Right ventricle myocardium inferior (tissue), 1 donor: ENCODE measurements at regions of chr14 and their contacts with region 1.

Region 1: GRCh38 chr14:21367582-21368144 is 16.2 kb downstream of the SUPT16H start:
- DNase-seq: no peak
- ATAC-seq: no peak

Region 2: GRCh38 chr14:21408147-21408546 is 40.5 kb after region 1 on chr14:
- intact Hi-C with region 1: loop called (anchors 5 kb)
- DNase-seq: no peak
- ATAC-seq: no peak

Region 3: GRCh38 chr14:21428930-21429329 is 61.3 kb after region 1 on chr14:
- intact Hi-C with region 1: no loop called
- DNase-seq: no peak
- ATAC-seq: peak; percentile 73